ENCODE measurements at regions of chr1 and their contacts with region 1.

Region 1: DNA sequence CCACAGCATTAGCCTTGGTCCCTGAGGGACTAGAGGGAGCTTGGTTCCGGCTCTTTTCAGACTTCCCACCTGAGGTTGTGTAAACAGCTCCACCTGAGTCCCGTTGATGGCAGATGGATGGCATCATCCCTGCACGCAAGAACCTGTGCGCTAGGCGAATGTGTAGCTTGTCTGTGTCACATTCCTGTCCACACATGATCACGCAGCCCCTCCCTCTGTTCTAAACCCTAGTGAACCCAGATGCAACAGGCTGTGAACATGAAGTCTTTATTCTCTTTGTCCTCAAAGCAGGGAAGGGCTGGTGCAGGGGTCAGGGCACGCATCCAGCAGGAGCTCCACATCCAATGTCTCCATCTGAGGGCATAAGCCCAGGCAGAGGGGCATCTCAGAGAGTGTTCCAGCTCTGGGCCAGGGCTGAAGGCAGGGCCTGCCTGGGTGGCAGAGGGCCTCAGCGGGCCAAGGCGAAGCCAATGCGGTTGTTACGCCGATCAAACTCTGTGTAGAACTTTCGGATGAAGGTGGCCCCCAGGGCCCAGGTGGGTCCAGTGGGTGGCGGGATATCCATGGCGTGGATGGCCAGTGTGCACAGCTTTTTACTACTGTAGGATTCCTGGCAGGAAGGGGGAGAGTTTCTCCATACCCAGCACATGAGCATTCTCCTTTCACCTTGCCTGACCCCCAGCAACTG is 2.9 kb upstream of the ETNK2 start:
- DNase-seq: no peak
- H3K4me3 ChIP-seq: no peak overlapping the region
- H3K27ac ChIP-seq: no peak overlapping the region
- H3K4me1 ChIP-seq: no peaks in the 10 kb centered on the region
- H3K27me3 ChIP-seq: no peaks in the 10 kb centered on the region

Region 2: DNA sequence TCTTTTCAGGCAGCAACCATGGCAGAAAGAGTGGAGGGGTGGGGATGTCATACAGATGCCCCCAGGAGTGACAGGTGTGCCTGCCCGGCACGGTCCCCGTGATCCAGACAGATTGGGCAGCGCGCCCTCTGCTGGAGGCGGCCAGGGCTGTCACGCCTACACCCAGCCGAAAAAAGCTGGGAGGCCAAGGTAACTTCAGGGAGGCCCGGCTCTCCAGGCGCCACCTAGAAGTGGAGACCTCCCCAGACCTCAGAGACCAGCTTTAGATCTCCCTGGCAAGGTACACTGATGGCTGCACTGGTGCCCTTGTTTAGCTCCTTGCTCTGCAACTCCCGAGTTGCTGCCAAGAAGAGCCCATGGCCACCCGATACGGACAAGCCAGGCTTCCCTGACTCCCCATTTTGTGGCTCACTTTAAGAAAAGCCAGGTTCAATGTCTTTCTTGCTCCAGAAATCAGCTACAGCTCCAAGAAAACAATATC is 52.5 kb after region 1 on chr1:
- in situ Hi-C with region 1: loop called (anchors 5 kb)
- DNase-seq: peak; percentile 64
- H3K4me3 ChIP-seq: no peak overlapping the region
- H3K27ac ChIP-seq: no peak overlapping the region
- H3K4me1 ChIP-seq: peaks cover 10% of the 10 kb centered on the region; the same call in 1 of the 2 replicates
- H3K27me3 ChIP-seq: 0 out of 2 replicates have a peak, but pooled peaks cover 4% of the 10 kb centered on the region

Measured in GM23248 (cell line).